RWPE1 (cell line): ENCODE measurements at regions of chr9 and their contacts with region 1.

Region 1: DNA sequence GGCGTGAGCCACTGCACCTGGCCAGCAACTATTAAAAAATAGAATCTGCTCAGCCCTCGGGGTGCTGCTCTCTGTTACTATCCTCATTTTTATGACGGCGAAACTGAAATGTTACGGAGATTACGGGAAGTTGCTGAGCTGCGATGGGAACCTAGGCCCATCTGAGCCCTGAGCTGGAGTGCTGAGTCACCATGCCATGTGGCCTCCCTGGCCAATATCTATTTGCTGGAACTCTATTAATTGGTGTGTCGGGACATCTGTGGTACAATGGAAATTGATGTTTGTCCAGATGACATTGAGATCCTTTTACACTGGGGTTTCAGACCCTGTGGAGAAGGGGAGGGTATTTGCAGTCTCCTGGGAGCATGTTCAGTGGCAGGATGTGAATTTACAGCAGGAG is 8.1 kb downstream of the PRDM12 start:
- DNase-seq: no peak
- H3K27ac ChIP-seq: no peak overlapping the region
- CTCF ChIP-seq: no peak

Region 2: DNA sequence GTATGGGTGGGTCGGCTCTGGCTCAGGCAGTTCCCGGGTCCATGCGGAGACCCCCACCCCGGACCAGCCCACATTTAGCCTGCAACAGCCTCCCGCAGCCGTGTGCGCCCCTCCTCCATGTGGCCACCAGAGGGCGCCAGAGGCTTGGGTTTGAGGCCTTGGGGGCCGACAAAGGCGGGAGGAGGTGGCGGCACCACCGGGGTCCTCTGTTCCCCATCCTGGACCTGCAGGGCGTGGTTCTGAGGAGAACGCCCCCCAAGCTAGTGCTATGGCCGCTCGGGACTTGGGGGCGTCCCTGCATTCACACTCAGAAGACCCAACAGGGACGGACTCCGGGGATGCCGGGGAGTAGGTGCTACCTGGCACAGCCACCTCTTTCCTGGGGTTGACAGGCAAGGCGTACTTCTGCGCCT is 211.2 kb before region 1 on chr9:
- CTCF ChIA-PET with region 1: no interaction called
- POLR2A ChIA-PET with region 1: interaction called, 12 read pairs
- DNase-seq: peak; percentile 78
- H3K27ac ChIP-seq: peak overlapping the region; percentile 37
- CTCF ChIP-seq: peak; percentile 97

Region 3: GRCh38 chr9:130535818-130536561 is 136.5 kb before region 1 on chr9:
- CTCF ChIA-PET with region 1: no interaction called
- POLR2A ChIA-PET with region 1: no interaction called
- DNase-seq: no peak
- H3K27ac ChIP-seq: peak overlapping the region; percentile 95
- CTCF ChIP-seq: no peak

Region 4: GRCh38 chr9:130549093-130549735 is 123.3 kb before region 1 on chr9:
- CTCF ChIA-PET with region 1: no interaction called
- POLR2A ChIA-PET with region 1: no interaction called
- DNase-seq: peak; percentile 70
- H3K27ac ChIP-seq: no peak overlapping the region
- CTCF ChIP-seq: no peak

Region 5: DNA sequence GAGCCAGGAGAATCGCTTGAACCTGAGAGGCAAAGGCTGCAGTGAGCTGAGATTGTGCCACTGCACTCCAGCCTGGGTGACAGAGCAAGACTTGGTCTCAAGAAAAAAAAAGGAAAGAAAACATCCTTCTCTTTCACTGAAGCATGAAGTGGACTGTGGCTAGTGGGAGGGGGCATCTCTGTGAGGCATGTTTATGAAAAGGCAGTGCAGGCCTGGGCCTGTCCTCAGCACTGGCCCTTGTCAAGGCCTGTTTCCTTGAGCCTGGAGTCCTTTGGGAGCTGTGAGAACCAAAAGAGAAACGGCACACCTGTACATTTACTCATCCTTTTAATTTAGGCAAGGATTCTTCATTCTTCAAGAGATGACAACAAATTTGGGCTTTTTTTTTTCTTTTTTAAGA is 111.4 kb before region 1 on chr9:
- CTCF ChIA-PET with region 1: no interaction called
- POLR2A ChIA-PET with region 1: no interaction called
- DNase-seq: peak; percentile 82
- H3K27ac ChIP-seq: peak overlapping the region; percentile 48
- CTCF ChIP-seq: no peak